GM12878 (cell line): ENCODE measurements at regions of chrX and their contacts with region 1.

Region 1: DNA sequence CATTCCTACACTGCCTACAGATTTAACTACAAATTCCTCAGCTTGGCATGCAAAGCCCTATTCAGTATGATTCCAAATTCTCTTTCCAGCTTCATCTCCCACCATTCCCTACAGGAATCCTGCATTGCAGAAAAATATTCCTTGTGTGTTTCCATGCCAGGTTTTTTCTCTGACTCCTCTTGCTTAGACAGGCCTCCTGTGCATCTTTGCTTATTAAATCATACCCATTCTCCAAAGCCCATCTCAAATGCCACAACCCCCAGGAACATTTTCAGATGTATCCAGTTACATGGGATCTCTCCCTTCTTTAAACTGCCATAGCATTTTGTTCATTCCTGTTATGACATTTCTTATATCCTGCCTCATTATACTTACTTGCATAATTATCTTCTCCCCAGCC is 106.4 kb upstream of the GRIA3 start:
- DNase-seq: no peak
- ATAC-seq: no peak
- H3K4me3 ChIP-seq: no peak overlapping the region
- H3K27ac ChIP-seq: no peak overlapping the region
- H3K4me1 ChIP-seq: no peaks in the 10 kb centered on the region
- H3K27me3 ChIP-seq: no peaks in the 10 kb centered on the region
- CTCF ChIP-seq: no peak
- EP300 ChIP-seq: no peak
- POLR2A ChIP-seq: no peak
- RAD21 ChIP-seq: no peak

Region 2: GRCh38 chrX:123093792-123094191 is 16.2 kb after region 1 on chrX:
- CTCF ChIA-PET with region 1: no interaction called
- POLR2A ChIA-PET with region 1: no interaction called
- RAD21 ChIA-PET with region 1: no interaction called
- SMC1A ChIA-PET with region 1: interaction called, 17 read pairs
- in situ Hi-C with region 1: no loop called
- intact Hi-C with region 1: no loop called
- DNase-seq: no peak
- ATAC-seq: no peak
- H3K4me3 ChIP-seq: no peak overlapping the region
- H3K27ac ChIP-seq: no peak overlapping the region
- H3K4me1 ChIP-seq: no peaks in the 10 kb centered on the region
- H3K27me3 ChIP-seq: no peaks in the 10 kb centered on the region
- CTCF ChIP-seq: no peak
- EP300 ChIP-seq: no peak
- POLR2A ChIP-seq: no peak
- RAD21 ChIP-seq: no peak